PC-9 (cell line): ENCODE measurements at regions of chr1 and their contacts with region 1.

Region 1: GRCh38 chr1:86965012-86965826 is 50.8 kb downstream of the HS2ST1 start:
- DNase-seq: peak in 1 of 2 experiments; percentile 6
- H3K4me3 ChIP-seq: no peak overlapping the region
- H3K27ac ChIP-seq: no peak overlapping the region
- H3K4me1 ChIP-seq: no peaks in the 10 kb centered on the region
- H3K27me3 ChIP-seq: no peaks in the 10 kb centered on the region
- CTCF ChIP-seq: peak; percentile 87

Region 2: DNA sequence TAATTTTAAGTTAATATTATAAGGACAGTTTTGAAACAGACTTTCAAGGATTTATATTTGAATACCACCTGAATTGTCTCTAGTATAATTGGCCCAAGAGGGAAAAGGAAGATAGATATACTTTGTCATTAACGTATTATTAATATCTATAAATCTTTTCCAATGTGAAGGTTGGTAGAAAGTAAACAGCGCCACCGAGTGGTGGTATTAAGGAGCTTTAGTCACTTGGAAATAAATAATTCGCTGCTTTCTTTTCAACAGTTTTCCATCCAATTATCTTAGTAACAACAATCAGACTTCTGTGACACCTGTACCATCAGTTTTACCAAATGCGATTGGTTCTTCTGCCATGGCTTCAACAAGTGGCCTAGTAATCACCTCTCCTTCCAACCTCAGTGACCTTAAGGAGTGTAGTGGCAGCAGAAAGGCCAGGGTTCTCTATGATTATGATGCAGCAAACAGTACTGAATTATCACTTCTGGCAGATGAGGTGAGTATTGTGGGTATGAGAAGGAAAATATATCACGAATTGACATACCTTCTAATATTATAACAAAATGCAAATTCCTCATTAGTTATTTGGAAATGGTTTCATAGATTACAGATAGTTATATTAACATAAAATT is 223.2 kb before region 1 on chr1:
- CTCF ChIA-PET with region 1: no interaction called
- POLR2A ChIA-PET with region 1: no interaction called
- intact Hi-C with region 1: loop called (anchors 10 kb)
- DNase-seq: peak in 1 of 2 experiments; percentile 11
- H3K4me3 ChIP-seq: no peak overlapping the region
- H3K27ac ChIP-seq: no peak overlapping the region
- H3K4me1 ChIP-seq: no peaks in the 10 kb centered on the region
- H3K27me3 ChIP-seq: no peaks in the 10 kb centered on the region
- CTCF ChIP-seq: peak; percentile 95

Region 3: DNA sequence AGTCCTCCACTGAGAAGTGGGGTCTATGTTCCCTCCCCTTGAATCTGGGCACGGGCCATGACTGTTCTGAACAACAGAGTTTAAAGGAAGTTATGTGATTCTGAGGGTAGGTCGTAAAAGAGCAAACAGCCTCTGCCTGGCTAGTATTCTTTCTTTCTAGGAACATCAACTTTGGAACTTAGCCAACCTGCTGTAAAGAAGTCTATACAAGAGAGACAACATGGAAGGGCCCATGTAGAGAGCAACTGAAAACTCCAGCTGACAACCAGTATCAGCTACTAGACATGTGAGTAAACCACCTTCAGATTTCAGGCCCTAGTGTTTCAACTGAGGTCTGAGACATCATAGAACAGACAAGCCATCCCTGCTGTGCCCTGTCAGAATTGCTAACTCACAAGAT is 58.8 kb before region 1 on chr1:
- CTCF ChIA-PET with region 1: no interaction called
- POLR2A ChIA-PET with region 1: no interaction called
- intact Hi-C with region 1: no loop called
- DNase-seq: peak in 1 of 2 experiments; percentile 39
- H3K4me3 ChIP-seq: no peak overlapping the region
- H3K27ac ChIP-seq: no peak overlapping the region
- H3K4me1 ChIP-seq: no peaks in the 10 kb centered on the region
- H3K27me3 ChIP-seq: no peaks in the 10 kb centered on the region
- CTCF ChIP-seq: no peak

Region 4: GRCh38 chr1:86991549-86992186 is 26.4 kb after region 1 on chr1:
- CTCF ChIA-PET with region 1: no interaction called
- POLR2A ChIA-PET with region 1: no interaction called
- intact Hi-C with region 1: loop called (anchors 1 kb)
- DNase-seq: no peak
- H3K4me3 ChIP-seq: no peak overlapping the region
- H3K27ac ChIP-seq: peak overlapping the region; percentile 74; the same call in 1 of the 2 replicates
- H3K4me1 ChIP-seq: peaks cover 49% of the 10 kb centered on the region
- H3K27me3 ChIP-seq: no peaks in the 10 kb centered on the region
- CTCF ChIP-seq: no peak

Region 5: GRCh38 chr1:87024936-87025540 is 59.8 kb after region 1 on chr1:
- CTCF ChIA-PET with region 1: no interaction called
- POLR2A ChIA-PET with region 1: no interaction called
- intact Hi-C with region 1: loop called (anchors 1 kb)
- DNase-seq: no peak
- H3K4me3 ChIP-seq: no peak overlapping the region
- H3K27ac ChIP-seq: no peak overlapping the region
- H3K4me1 ChIP-seq: no peaks in the 10 kb centered on the region
- H3K27me3 ChIP-seq: no peaks in the 10 kb centered on the region
- CTCF ChIP-seq: peak; percentile 70